A673 (cell line): ENCODE measurements at regions of chr5 and their contacts with region 1.

Region 1: GRCh38 chr5:179974946-179975712 is 67.4 kb upstream of the TBC1D9B start:
- DNase-seq: peak; percentile 11
- H3K4me3 ChIP-seq: no peak overlapping the region
- H3K27ac ChIP-seq: no peak overlapping the region
- H3K4me1 ChIP-seq: no peaks in the 10 kb centered on the region
- H3K27me3 ChIP-seq: no peaks in the 10 kb centered on the region
- CTCF ChIP-seq: peak; percentile 51

Region 2: DNA sequence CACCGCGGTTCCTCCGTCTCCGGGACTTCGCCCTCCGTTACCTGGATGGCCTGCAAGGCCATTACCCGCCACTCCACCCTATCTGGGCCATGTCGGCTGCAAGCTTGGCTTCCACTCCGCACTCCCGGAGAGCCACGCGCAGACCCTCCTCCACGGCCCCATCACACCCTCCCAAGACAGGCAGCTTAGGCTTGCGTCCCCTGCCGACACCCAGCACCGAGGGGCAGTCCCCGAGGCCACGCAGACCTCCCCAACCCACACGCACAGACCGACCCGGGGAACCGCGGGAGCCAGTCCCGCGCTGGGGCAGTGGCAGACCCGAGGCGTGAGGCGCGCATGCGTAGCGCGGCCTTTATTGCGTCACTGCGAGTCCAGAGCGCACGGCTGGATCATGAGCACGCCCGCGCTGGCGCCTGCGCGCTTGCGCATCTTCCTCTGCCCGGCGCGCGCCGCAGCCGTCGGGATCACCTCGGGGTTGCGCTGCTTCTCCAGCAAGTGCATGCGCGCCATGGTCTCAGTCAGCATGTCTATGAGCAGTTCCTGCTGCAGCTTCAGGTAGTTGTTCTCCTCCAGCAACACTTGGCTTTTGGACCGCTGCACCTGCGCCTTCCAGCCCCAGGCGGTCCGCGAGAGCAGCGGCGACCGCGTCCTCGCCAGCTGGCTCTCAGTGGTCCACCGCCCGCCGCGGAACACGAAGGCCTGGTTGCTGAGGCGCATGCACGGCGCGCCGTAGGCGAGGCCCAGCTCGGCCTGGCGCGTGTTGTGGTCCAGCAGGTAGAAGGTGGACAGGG is 296.7 kb before region 1 on chr5:
- CTCF ChIA-PET with region 1: interaction called, 12 read pairs
- POLR2A ChIA-PET with region 1: no interaction called
- intact Hi-C with region 1: no loop called
- DNase-seq: peak; percentile 96
- H3K4me3 ChIP-seq: peak overlapping the region; percentile 96
- H3K27ac ChIP-seq: peak overlapping the region; percentile 92
- H3K4me1 ChIP-seq: peaks cover 8% of the 10 kb centered on the region
- H3K27me3 ChIP-seq: no peaks in the 10 kb centered on the region
- CTCF ChIP-seq: no peak

Region 3: GRCh38 chr5:179795863-179796833 is 179.0 kb before region 1 on chr5:
- CTCF ChIA-PET with region 1: no interaction called
- POLR2A ChIA-PET with region 1: no interaction called
- intact Hi-C with region 1: no loop called
- DNase-seq: peak; percentile 72
- H3K4me3 ChIP-seq: peak overlapping the region; percentile 54
- H3K27ac ChIP-seq: peak overlapping the region; percentile 67
- H3K4me1 ChIP-seq: no peaks in the 10 kb centered on the region
- H3K27me3 ChIP-seq: no peaks in the 10 kb centered on the region
- CTCF ChIP-seq: peak; percentile 51

Region 4: GRCh38 chr5:179878222-179879009 is 96.7 kb before region 1 on chr5:
- CTCF ChIA-PET with region 1: no interaction called
- POLR2A ChIA-PET with region 1: no interaction called
- intact Hi-C with region 1: no loop called
- DNase-seq: no peak
- H3K4me3 ChIP-seq: no peak overlapping the region
- H3K27ac ChIP-seq: no peak overlapping the region
- H3K4me1 ChIP-seq: no peaks in the 10 kb centered on the region
- H3K27me3 ChIP-seq: no peaks in the 10 kb centered on the region
- CTCF ChIP-seq: no peak